Psoas muscle (tissue), 8 donors: ENCODE measurements at regions of chr9 and their contacts with region 1.

Region 1: DNA sequence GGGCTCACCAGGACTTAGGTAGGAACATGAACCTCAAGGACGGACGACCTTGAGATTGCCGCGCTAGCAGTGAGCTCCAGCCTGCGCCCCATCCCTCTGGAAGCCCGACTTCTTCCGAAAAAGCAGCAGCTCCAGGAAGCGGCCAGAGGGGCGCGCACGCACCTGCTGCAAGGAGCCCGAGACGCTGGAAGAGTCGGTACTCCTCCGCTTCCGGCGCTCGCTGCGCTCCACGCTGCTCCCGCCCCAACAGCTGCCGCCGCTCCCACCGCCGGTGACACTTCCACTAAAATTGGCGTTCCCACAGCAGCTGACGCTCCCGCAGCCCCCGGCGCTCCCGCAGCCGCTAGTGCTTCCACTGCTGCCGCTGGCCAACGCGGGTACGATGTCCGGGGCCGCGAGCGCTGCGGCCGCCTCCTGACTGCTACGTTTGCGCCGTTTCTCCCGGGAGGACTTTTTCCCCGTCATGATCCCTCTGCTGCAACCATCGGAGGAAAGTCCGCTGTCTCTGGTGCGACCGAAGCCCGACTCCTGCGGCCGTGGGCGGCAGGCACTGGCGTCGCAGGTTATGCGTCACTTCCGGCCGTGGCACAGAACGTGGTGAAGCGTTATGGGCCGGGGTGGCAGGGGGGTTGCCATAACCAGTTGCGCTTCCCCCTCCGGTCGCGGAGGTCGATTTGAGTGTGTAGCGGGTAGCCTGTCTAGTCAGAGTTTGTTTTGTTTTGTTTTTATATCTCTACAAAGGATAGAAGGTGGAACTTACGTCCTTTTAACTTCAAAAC is at the start of gene CAAP1:
- DNase-seq: peak; percentile 96 to 98
- ATAC-seq: peak; percentile 98 to 99 (median 98)
- H3K4me3 ChIP-seq: peak within 1 kb of the TSS; percentile 92
- H3K27ac ChIP-seq: peak within 1 kb of the TSS; percentile 99
- H3K4me1 ChIP-seq: peaks cover 19% of the 10 kb centered on the region
- H3K27me3 ChIP-seq: no peaks in the 10 kb centered on the region
- CTCF ChIP-seq: peak; percentile 33
- total RNA-seq, gene CAAP1: 4.7 to 8.8 (median 6.1) TPM

Region 2: DNA sequence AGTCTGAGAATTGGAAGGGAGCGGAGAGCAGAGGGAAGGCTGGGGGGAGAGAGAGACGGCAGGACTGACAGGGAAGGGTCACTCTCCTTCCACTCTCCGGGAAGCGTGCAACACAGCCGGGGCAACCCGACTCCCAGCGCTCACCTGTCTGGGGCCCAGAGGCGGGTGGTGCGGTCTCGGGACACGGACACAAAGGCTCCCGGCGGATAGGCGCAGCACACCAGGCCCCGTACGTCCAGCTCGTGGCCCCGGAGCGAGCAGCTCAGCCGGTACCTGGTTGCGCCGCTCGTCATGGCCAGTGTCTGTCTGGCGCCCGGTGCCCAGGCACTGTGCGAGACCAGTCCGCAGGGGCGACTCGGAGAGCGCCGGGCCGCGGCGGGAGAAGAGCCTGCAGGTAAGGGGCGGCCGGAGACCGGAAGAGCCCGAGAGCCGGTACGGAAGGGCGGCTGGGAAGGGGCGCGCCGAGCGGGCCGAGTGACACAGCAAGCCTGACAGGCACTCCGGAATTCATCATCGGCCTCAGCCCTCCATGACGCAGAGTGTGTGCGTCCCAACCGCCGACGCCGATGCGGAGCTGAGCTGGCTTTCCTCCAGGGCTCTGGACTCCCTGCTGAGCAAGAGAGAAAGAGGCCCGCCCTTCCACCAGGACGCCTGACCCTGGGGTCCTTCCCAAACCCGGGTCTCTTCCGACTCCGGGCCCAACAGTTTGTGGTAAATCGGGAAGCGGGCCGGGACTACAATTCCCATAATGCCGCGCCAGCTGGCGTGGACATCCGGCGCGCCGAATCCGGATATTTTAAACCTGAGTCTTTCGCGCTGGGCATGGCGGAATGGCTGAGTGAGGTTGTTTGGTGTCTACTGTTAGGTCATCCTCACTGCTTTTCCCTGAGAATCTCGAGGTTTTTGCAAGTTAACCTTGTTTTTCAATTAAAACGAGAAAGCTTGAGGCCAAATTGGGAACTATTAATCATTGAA is 54.6 kb after region 1 on chr9 and contains the start of gene PLAA:
- intact Hi-C with region 1: loop called (anchors 2 to 5 kb)
- DNase-seq: peak; percentile 92 to 95
- ATAC-seq: peak; percentile 98 to 99 (median 99)
- H3K4me3 ChIP-seq: peak within 1 kb of the TSS; percentile 96
- H3K27ac ChIP-seq: peak within 1 kb of the TSS; percentile 95
- H3K4me1 ChIP-seq: peaks cover 24% of the 10 kb centered on the region
- H3K27me3 ChIP-seq: no peaks in the 10 kb centered on the region
- CTCF ChIP-seq: peak; percentile 26
- total RNA-seq, gene PLAA: 42.8 to 91.7 (median 66.0) TPM

Region 3: GRCh38 chr9:26955921-26956859 is 63.8 kb after region 1 on chr9 and contains the start of gene IFT74:
- intact Hi-C with region 1: loop called in 1 of 2 experiments (anchors 2 kb)
- DNase-seq: peak; percentile 98
- ATAC-seq: peak; percentile 100
- H3K4me3 ChIP-seq: peak within 1 kb of the TSS; percentile 66
- H3K27ac ChIP-seq: peak within 1 kb of the TSS; percentile 80
- H3K4me1 ChIP-seq: peaks cover 9% of the 10 kb centered on the region
- H3K27me3 ChIP-seq: no peaks in the 10 kb centered on the region
- CTCF ChIP-seq: no peak
- total RNA-seq, gene IFT74: 7.7 to 11.5 (median 8.1) TPM